Mammary epithelial cell (primary cell): ENCODE measurements at regions of chrX and their contacts with region 1.

Region 1: GRCh38 chrX:104351173-104351769 is 96.5 kb upstream of the ESX1 start:
- DNase-seq: peak; percentile 91
- H3K4me3 ChIP-seq: no peak overlapping the region
- H3K27ac ChIP-seq: peak overlapping the region; percentile 59
- H3K4me1 ChIP-seq: peaks cover 26% of the 10 kb centered on the region
- H3K27me3 ChIP-seq: no peaks in the 10 kb centered on the region
- CTCF ChIP-seq: no peak

Region 2: DNA sequence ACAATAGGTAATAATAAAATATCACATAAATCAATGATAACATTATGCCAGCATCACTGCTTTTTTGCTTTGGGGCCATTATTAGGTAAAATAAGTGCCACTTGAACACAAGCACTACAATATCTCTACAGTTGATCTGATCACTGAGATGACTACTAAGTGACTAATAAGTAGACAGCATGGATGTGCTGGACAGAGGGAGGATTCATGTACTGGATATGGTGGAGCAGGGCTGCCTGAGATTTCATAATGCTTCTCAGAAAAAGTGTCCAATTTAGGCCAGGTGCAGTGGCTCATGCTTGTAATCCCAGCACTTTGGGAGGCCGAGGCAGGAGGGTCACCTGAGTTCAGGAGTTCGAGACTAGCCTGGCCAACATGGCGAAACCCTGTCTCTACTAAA is 77.0 kb after region 1 on chrX:
- CTCF ChIA-PET with region 1: no interaction called
- dilution Hi-C with region 1: no loop called
- in situ Hi-C with region 1: no loop called
- intact Hi-C with region 1: loop called (anchors 5 kb)
- DNase-seq: peak; percentile 73
- H3K4me3 ChIP-seq: no peak overlapping the region
- H3K27ac ChIP-seq: no peak overlapping the region
- H3K4me1 ChIP-seq: peaks cover 32% of the 10 kb centered on the region
- H3K27me3 ChIP-seq: no peaks in the 10 kb centered on the region
- CTCF ChIP-seq: no peak

Region 3: GRCh38 chrX:104445446-104446019 is 94.3 kb after region 1 on chrX:
- CTCF ChIA-PET with region 1: no interaction called
- dilution Hi-C with region 1: no loop called
- in situ Hi-C with region 1: no loop called
- intact Hi-C with region 1: no loop called
- DNase-seq: no peak
- H3K4me3 ChIP-seq: no peak overlapping the region
- H3K27ac ChIP-seq: no peak overlapping the region
- H3K4me1 ChIP-seq: no peaks in the 10 kb centered on the region
- H3K27me3 ChIP-seq: no peaks in the 10 kb centered on the region
- CTCF ChIP-seq: no peak